ENCODE measurements at regions of chr21 and their contacts with region 1.

Region 1: DNA sequence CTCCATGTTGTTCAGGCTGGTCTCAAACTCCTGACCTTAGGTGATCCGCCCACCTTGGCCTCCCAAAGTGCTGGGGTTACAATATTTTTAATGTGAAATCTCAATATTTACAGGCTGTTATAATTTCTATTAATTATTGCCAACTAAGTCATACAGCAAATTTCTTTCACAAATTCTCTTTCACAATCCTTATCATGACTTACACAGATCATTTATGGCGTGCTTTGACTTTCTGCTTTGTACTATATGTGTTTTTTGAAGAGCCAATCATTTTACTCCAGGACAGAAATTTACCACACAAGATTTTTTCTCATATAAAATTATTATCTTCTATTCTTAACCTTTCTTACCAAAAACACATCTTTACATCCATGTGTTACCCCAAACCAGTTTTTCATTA is 1729.9 kb downstream of the NCAM2 start:
- DNase-seq: no peak
- ATAC-seq: no peak
- H3K4me3 ChIP-seq: no peak overlapping the region
- H3K4me3 Mint-ChIP-seq: no peak overlapping the region
- H3K27ac ChIP-seq: no peak overlapping the region
- H3K27ac Mint-ChIP-seq: no peak overlapping the region
- H3K4me1 ChIP-seq: no peaks in the 10 kb centered on the region
- H3K4me1 Mint-ChIP-seq: no peaks in the 10 kb centered on the region
- H3K27me3 ChIP-seq: no peaks in the 10 kb centered on the region
- H3K27me3 Mint-ChIP-seq: no peaks in the 10 kb centered on the region
- CTCF ChIP-seq: no peak

Region 2: DNA sequence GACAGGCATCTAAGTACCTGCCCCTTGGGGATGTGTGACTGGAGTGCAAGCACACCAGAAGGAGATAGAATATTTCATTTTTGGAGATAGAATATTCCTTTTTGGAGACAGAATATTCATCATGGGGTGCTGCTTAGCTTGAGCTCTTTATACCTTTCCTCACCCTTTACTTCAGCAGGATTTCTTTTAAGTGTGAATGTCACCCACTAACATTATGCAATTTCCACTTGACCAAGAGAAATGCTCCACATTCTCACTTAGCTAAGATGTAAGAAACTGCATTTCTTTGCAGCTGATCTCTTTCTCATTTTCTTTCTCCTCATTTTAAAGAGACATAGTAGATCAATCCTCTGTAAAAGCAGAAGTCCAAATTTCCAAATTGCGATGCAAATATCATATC is 1293.1 kb before region 1 on chr21:
- CTCF ChIA-PET with region 1: no interaction called
- POLR2A ChIA-PET with region 1: no interaction called
- intact Hi-C with region 1: loop called in 1 of 2 experiments (anchors 5 kb)
- DNase-seq: no peak
- ATAC-seq: no peak
- H3K4me3 ChIP-seq: no peak overlapping the region
- H3K4me3 Mint-ChIP-seq: no peak overlapping the region
- H3K27ac ChIP-seq: no peak overlapping the region
- H3K27ac Mint-ChIP-seq: no peak overlapping the region
- H3K4me1 ChIP-seq: no peaks in the 10 kb centered on the region
- H3K4me1 Mint-ChIP-seq: no peaks in the 10 kb centered on the region
- H3K27me3 ChIP-seq: no peaks in the 10 kb centered on the region
- H3K27me3 Mint-ChIP-seq: no peaks in the 10 kb centered on the region
- CTCF ChIP-seq: no peak